ENCODE measurements at regions of chr4 and their contacts with region 1.

Region 1: DNA sequence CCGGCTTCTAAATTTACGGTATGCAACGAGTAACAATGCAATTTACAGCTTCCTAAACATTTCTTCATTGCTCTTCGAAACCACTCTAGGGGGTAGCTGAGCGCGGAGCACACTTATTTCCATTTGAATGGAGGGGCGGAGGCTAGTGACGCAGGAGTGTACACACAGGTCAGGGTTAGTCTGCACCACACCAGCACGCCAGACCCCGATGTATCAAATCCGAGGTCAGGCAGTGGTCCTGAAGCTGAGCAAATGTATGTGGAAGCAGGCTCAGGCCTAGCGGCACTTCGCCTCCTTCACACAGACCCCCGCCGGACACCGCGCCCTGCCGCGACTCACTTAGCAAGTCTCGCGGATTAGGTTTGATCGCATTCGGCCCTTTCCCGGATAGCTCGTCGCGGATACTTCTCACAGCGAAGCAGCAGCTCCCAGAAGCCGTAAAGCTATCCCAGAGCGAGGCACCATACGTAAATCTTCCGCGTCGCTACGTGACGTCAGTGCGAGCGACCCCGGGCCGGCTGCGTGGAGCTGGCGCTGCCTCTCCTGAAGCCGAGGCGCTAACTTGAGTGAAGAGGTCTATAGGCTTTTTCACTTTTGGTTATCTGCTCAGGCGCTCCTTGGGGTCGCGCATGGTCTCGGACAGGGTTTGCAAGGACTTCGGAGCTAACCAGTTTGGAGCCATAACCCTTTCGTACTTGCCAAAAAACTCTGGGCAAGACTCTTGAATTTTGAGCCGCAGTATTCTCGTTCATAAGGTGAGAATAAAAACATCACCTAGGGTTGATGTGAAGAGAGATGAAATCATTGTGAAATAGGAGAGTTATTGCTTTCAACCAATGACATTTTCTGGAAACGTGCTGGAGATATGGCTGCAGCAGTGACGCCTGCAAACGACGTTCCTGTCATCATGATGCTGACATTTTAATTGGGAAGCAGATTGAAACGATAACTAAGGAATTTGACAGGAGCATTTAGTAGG is at the start of gene AASDH:
- DNase-seq: peak; percentile 91 to 99 (median 96)
- ATAC-seq: peak; percentile 88
- H3K4me3 ChIP-seq: peak within 1 kb of the TSS; percentile 79 to 82
- H3K4me3 Mint-ChIP-seq: peak within 1 kb of the TSS; percentile 97
- H3K27ac ChIP-seq: peak within 1 kb of the TSS; percentile 93 to 94
- H3K27ac Mint-ChIP-seq: peak within 1 kb of the TSS; percentile 99
- H3K4me1 ChIP-seq: peaks cover 21% of the 10 kb centered on the region
- H3K4me1 Mint-ChIP-seq: peaks cover 46% of the 10 kb centered on the region
- H3K27me3 ChIP-seq: no peaks in the 10 kb centered on the region
- H3K27me3 Mint-ChIP-seq: no peaks in the 10 kb centered on the region
- CTCF ChIP-seq: no peak
- total RNA-seq, gene AASDH: 9.1 to 9.8 TPM

Region 2: DNA sequence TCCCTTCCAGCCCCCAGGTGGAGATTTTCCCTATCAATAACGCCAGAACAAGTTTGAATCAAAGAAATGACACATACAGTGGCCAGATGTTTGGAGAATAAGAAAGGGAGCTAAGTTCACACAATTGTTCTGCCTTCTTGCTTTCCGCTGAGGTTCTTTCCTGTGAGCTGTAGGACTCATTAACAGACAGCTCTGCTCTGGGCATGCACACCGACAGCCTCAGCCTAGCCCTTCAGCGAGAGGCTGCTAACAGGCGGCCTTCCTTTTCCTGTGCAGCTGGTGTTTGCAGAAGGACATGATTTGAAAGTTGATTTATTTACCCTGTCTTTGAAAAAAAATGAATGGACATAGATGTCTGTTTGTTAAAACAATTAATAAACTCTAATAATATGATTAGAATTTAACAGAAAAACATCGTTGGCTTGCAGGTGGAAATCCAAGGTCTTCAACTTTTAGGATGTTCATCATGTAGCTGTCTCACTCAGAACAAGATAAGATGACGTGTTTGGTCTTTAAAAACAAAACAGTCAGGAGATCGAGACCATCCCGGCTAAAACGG is 1445.2 kb before region 1 on chr4:
- CTCF ChIA-PET with region 1: no interaction called
- POLR2A ChIA-PET with region 1: no interaction called
- intact Hi-C with region 1: loop called in 1 of 2 experiments (anchors 5 kb)
- DNase-seq: peak; percentile 18 to 78 (median 34)
- ATAC-seq: peak; percentile 79
- H3K4me3 ChIP-seq: peak overlapping the region in 1 of 2 experiments; percentile 12
- H3K4me3 Mint-ChIP-seq: peak overlapping the region; percentile 71
- H3K27ac ChIP-seq: peak overlapping the region; percentile 59 to 72
- H3K27ac Mint-ChIP-seq: peak overlapping the region; percentile 98
- H3K4me1 ChIP-seq: peaks cover 40% of the 10 kb centered on the region
- H3K4me1 Mint-ChIP-seq: peaks cover 56% of the 10 kb centered on the region
- H3K27me3 ChIP-seq: no peaks in the 10 kb centered on the region
- H3K27me3 Mint-ChIP-seq: no peaks in the 10 kb centered on the region
- CTCF ChIP-seq: no peak

Region 3: DNA sequence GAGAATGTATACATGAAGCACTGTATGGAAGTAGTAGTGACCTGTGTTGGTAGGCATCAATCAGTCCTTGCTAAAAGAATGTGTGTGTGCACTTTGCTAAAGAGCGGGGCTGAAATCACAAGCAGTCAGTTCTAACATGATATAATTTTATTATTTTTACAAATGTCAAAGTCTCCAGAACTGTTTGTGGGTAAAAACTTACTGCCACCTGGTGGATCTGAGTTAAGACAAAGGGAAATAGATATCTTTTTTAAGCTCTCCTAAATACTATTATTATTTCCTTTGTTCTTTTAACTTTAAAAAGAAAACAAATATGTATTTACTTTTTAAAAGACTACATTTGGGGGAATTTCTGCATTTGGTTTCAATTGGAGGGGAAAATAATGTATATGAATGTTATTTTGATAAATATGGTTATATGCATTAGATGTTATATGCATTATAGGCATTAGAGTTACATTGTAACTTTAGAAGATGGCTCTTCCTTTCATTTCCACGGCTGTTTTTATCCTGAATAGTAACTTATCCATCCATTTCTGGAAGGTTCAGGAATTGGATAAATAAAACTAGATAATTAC is 832.8 kb before region 1 on chr4:
- CTCF ChIA-PET with region 1: no interaction called
- POLR2A ChIA-PET with region 1: no interaction called
- intact Hi-C with region 1: loop called (anchors 10 kb)
- DNase-seq: peak in 2 of 9 experiments; percentile 54 to 67
- ATAC-seq: peak; percentile 60
- H3K4me3 ChIP-seq: no peak overlapping the region
- H3K4me3 Mint-ChIP-seq: no peak overlapping the region
- H3K27ac ChIP-seq: no peak overlapping the region
- H3K27ac Mint-ChIP-seq: no peak overlapping the region
- H3K4me1 ChIP-seq: no peaks in the 10 kb centered on the region
- H3K4me1 Mint-ChIP-seq: peaks cover 7% of the 10 kb centered on the region
- H3K27me3 ChIP-seq: no peaks in the 10 kb centered on the region
- H3K27me3 Mint-ChIP-seq: peaks cover 24% of the 10 kb centered on the region
- CTCF ChIP-seq: peak; percentile 67

Region 4: GRCh38 chr4:56416349-56416748 is 29.0 kb after region 1 on chr4:
- CTCF ChIA-PET with region 1: no interaction called
- POLR2A ChIA-PET with region 1: no interaction called
- intact Hi-C with region 1: no loop called
- DNase-seq: no peak
- ATAC-seq: no peak
- H3K4me3 ChIP-seq: no peak overlapping the region
- H3K4me3 Mint-ChIP-seq: no peak overlapping the region
- H3K27ac ChIP-seq: no peak overlapping the region
- H3K27ac Mint-ChIP-seq: no peak overlapping the region
- H3K4me1 ChIP-seq: no peaks in the 10 kb centered on the region
- H3K4me1 Mint-ChIP-seq: peaks cover 4% of the 10 kb centered on the region
- H3K27me3 ChIP-seq: no peaks in the 10 kb centered on the region
- H3K27me3 Mint-ChIP-seq: no peaks in the 10 kb centered on the region
- CTCF ChIP-seq: no peak

Region 5: DNA sequence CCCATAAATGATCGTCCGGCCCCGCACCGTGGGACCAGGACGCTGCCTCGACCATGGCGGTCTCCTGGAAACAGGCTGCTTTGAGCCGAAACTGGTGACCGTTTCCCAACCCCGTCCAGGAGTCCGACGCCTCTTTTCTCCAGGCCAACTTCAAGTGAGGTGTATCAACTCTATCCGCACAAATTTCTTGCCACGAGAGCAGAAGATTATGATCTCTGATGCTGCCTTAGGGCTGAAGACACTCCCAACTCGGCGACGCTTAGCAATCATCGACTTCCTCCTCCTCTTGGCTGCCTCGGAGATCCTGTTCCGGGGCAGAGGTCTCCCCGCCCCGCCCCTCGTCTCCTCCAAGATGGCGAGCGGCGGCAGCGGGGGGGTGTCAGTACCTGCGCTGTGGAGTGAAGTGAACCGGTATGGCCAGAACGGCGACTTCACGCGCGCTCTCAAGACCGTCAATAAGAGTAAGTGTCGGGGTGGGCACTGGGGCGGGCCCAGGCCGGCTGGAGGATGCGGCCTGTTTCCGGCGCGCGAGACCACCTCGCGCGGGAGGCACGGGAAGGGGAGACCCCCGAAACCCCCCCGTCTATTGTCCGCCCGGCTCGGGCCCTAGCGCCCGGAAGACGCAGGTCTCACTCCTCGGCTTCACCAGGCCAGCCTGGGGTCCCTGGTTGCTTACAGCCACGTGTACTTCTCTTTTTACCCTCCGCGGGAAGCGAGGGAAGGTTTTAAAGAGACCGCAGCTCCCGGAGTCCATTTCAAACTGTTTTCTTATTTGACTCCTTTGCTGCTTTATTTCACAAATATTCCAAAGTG is 80.2 kb after region 1 on chr4 and contains the start of gene SRP72:
- CTCF ChIA-PET with region 1: no interaction called
- POLR2A ChIA-PET with region 1: interaction called, 7 read pairs
- intact Hi-C with region 1: loop called (anchors 1 kb)
- DNase-seq: peak; percentile 81 to 95 (median 90)
- ATAC-seq: peak; percentile 96
- H3K4me3 ChIP-seq: peak within 1 kb of the TSS; percentile 63 to 98
- H3K4me3 Mint-ChIP-seq: peak within 1 kb of the TSS; percentile 100
- H3K27ac ChIP-seq: peak within 1 kb of the TSS; percentile 69 to 92
- H3K27ac Mint-ChIP-seq: peak within 1 kb of the TSS; percentile 100
- H3K4me1 ChIP-seq: peaks cover 44% of the 10 kb centered on the region
- H3K4me1 Mint-ChIP-seq: peaks cover 60% of the 10 kb centered on the region
- H3K27me3 ChIP-seq: no peaks in the 10 kb centered on the region
- H3K27me3 Mint-ChIP-seq: no peaks in the 10 kb centered on the region
- CTCF ChIP-seq: no peak
- total RNA-seq, gene SRP72: 142 to 148 TPM

Region 6: DNA sequence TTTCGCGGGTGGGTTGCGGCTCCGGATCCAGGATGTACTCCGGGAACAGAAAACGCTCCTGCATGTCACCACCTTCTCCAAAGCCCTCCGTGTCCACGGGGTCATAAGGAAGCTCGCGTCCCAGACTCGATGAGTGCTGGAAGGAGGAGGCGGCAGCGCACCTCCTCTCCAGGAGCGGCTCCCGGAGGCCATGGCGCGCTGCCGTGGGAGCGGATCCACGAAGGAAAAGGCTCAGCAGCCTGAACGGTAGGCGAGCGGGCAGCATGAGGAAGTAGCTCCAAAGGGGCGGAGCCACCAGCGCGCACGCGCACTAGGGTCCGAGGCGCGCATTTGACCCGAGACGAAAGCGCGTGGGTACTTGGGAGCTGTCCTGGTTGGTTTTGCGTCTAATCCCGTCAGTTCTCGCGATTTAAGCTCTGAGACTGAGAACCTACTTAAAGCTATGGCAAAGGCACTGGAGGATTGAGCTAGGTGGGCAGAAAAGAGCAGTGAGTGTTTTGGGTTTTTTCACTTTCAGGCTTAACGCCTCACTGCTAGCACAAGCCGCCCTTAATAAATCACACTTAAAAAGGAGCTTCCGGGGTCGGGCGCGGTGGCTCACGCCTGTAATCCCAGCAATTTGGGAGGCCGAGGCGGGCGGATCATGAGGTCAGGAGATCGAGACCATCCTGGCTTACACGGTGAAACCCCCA is 590.2 kb after region 1 on chr4 and contains the start of gene NOA1:
- CTCF ChIA-PET with region 1: interaction called, 3 read pairs
- POLR2A ChIA-PET with region 1: interaction called, 19 read pairs
- intact Hi-C with region 1: loop called (anchors 1 to 2 kb)
- DNase-seq: peak; percentile 95 to 99 (median 97)
- ATAC-seq: peak; percentile 79
- H3K4me3 ChIP-seq: peak within 1 kb of the TSS; percentile 94 to 100
- H3K4me3 Mint-ChIP-seq: peak within 1 kb of the TSS; percentile 93
- H3K27ac ChIP-seq: peak within 1 kb of the TSS; percentile 78 to 84
- H3K27ac Mint-ChIP-seq: peak within 1 kb of the TSS; percentile 94
- H3K4me1 ChIP-seq: peaks cover 45% of the 10 kb centered on the region
- H3K4me1 Mint-ChIP-seq: peaks cover 56% of the 10 kb centered on the region
- H3K27me3 ChIP-seq: no peaks in the 10 kb centered on the region
- H3K27me3 Mint-ChIP-seq: no peaks in the 10 kb centered on the region
- CTCF ChIP-seq: no peak
- total RNA-seq, gene NOA1: 16.5 to 17.2 TPM

Measured in CD8-positive, alpha-beta T cell (primary cell).